ENCODE measurements at regions of chr3 and their contacts with region 1.

Region 1: GRCh38 chr3:40179016-40179415 is 130.5 kb upstream of the EIF1B start:
- DNase-seq: peak; percentile 63
- H3K4me3 ChIP-seq: peak overlapping the region in 1 of 2 experiments; percentile 14; a peak in 1 of 4 replicates
- H3K27ac ChIP-seq: no peak overlapping the region
- H3K4me1 ChIP-seq: peaks cover 0 to 3% of the 10 kb centered on the region in 2 experiments; a peak in 1 of 4 replicates
- H3K27me3 ChIP-seq: no peaks in the 10 kb centered on the region
- CTCF ChIP-seq: peak; percentile 84
- EP300 ChIP-seq: no peak
- RAD21 ChIP-seq: peak; percentile 93

Region 2: GRCh38 chr3:39541917-39542329 is 637.1 kb before region 1 on chr3:
- CTCF ChIA-PET with region 1: interaction called, 49 read pairs
- POLR2A ChIA-PET with region 1: no interaction called
- DNase-seq: peak; percentile 6
- H3K4me3 ChIP-seq: peak overlapping the region in 1 of 2 experiments; percentile 16; a peak in 1 of 4 replicates
- H3K27ac ChIP-seq: no peak overlapping the region
- H3K4me1 ChIP-seq: no peaks in the 10 kb centered on the region; a peak in 1 of 4 replicates
- H3K27me3 ChIP-seq: no peaks in the 10 kb centered on the region
- CTCF ChIP-seq: peak; percentile 71
- EP300 ChIP-seq: no peak
- RAD21 ChIP-seq: peak; percentile 71

Region 3: GRCh38 chr3:39707314-39707909 is 471.6 kb before region 1 on chr3:
- CTCF ChIA-PET with region 1: interaction called, 32 read pairs
- POLR2A ChIA-PET with region 1: no interaction called
- DNase-seq: peak; percentile 59
- H3K4me3 ChIP-seq: no peak overlapping the region; a peak in 1 of 4 replicates
- H3K27ac ChIP-seq: no peak overlapping the region
- H3K4me1 ChIP-seq: no peaks in the 10 kb centered on the region
- H3K27me3 ChIP-seq: no peaks in the 10 kb centered on the region
- CTCF ChIP-seq: peak; percentile 78
- EP300 ChIP-seq: no peak
- RAD21 ChIP-seq: peak; percentile 72

Region 4: GRCh38 chr3:39812537-39812936 is 366.5 kb before region 1 on chr3:
- CTCF ChIA-PET with region 1: interaction called, 32 read pairs
- POLR2A ChIA-PET with region 1: no interaction called
- DNase-seq: peak; percentile 31
- H3K4me3 ChIP-seq: no peak overlapping the region
- H3K27ac ChIP-seq: no peak overlapping the region
- H3K4me1 ChIP-seq: peaks cover 0 to 16% of the 10 kb centered on the region in 2 experiments; a peak in 1 of 4 replicates
- H3K27me3 ChIP-seq: peaks cover 16% of the 10 kb centered on the region
- CTCF ChIP-seq: peak; percentile 60
- EP300 ChIP-seq: no peak
- RAD21 ChIP-seq: peak; percentile 67

Region 5: DNA sequence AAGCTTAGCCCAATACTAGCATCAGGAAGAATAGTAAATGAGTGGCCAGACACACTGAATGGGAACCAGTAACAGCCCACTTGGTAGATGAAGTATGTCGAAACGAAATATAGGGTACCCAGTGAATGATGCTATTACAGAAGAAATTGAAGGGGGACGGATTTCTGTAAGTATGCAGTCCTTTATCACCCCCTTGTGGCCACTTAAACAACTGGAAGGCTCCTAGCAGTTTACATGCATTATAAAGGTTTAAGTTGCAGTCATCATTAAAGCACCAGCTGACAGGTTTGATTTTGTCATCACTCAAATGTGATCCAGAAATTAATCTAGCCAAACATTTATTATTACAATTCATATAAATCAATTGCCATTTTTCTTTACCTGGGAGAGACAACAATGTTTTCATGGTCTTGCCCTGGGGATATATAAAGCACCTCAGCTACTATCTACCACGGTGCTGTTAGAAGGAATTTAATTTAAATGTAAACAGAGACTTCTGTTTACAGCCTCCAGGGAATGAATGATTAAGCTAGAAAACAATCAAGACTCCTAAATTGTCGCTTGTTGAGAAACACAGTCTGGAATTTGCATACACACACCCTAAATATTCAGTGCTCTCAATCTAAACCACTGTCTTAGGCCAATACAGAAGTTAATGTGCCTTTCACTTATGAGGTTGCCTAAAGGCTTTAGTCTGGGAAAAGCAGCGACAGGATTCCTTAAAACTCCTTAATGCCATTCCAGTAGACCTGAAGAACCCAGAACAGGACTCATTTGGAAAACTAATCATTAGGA is 138.2 kb after region 1 on chr3:
- CTCF ChIA-PET with region 1: interaction called, 27 read pairs
- POLR2A ChIA-PET with region 1: no interaction called
- DNase-seq: peak; percentile 65
- H3K4me3 ChIP-seq: no peak overlapping the region; a peak in 1 of 4 replicates
- H3K27ac ChIP-seq: no peak overlapping the region
- H3K4me1 ChIP-seq: peaks cover 0 to 10% of the 10 kb centered on the region in 2 experiments; a peak in 2 of 4 replicates
- H3K27me3 ChIP-seq: no peaks in the 10 kb centered on the region
- CTCF ChIP-seq: peak; percentile 90
- EP300 ChIP-seq: no peak
- RAD21 ChIP-seq: peak; percentile 93

Region 6: GRCh38 chr3:40382617-40382979 is 203.6 kb after region 1 on chr3:
- CTCF ChIA-PET with region 1: no interaction called
- POLR2A ChIA-PET with region 1: no interaction called
- DNase-seq: no peak
- H3K4me3 ChIP-seq: no peak overlapping the region
- H3K27ac ChIP-seq: no peak overlapping the region
- H3K4me1 ChIP-seq: no peaks in the 10 kb centered on the region
- H3K27me3 ChIP-seq: no peaks in the 10 kb centered on the region
- CTCF ChIP-seq: no peak
- EP300 ChIP-seq: no peak
- RAD21 ChIP-seq: no peak

Measured in SK-N-SH (cell line).